Activated CD4-positive, alpha-beta T cell treated with anti-CD3 and anti-CD28 coated beads for 36 hours (primary cell): ENCODE measurements at regions of chr1 and their contacts with region 1.

Region 1: DNA sequence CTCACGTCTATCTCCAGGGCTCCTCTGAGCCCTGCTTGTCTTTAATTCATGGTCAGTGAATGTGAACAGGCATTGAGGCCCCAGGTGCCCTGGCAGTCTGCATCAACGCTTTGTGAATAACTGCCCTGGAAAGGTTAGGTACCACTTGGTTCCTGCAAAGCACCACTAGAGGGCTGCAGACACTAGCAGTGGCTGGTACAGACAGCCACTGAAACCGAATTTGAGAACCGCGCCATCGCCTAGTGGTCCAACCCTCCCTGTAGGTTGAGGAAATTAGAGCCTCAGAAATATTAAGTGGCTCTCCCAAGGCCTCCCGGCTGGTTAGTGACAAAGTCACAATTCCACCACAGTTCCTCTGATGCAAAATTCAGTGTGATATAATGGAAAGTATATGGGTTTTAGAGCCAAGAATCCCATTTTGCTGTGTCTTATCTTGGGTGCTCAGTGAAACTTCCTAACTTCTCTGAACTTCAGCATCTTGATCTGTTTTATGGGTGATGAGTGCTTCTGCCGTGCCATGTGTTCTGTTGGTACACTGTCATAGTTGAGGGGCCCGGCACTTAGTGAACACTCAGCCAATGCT is 46.2 kb upstream of the BCL9 start:
- DNase-seq: peak; percentile 85
- ATAC-seq: peak; percentile 100
- H3K4me3 Mint-ChIP-seq: no peak overlapping the region
- H3K27ac Mint-ChIP-seq: no peak overlapping the region
- H3K4me1 Mint-ChIP-seq: peaks cover 3% of the 10 kb centered on the region
- H3K27me3 Mint-ChIP-seq: peaks cover 2% of the 10 kb centered on the region

Region 2: DNA sequence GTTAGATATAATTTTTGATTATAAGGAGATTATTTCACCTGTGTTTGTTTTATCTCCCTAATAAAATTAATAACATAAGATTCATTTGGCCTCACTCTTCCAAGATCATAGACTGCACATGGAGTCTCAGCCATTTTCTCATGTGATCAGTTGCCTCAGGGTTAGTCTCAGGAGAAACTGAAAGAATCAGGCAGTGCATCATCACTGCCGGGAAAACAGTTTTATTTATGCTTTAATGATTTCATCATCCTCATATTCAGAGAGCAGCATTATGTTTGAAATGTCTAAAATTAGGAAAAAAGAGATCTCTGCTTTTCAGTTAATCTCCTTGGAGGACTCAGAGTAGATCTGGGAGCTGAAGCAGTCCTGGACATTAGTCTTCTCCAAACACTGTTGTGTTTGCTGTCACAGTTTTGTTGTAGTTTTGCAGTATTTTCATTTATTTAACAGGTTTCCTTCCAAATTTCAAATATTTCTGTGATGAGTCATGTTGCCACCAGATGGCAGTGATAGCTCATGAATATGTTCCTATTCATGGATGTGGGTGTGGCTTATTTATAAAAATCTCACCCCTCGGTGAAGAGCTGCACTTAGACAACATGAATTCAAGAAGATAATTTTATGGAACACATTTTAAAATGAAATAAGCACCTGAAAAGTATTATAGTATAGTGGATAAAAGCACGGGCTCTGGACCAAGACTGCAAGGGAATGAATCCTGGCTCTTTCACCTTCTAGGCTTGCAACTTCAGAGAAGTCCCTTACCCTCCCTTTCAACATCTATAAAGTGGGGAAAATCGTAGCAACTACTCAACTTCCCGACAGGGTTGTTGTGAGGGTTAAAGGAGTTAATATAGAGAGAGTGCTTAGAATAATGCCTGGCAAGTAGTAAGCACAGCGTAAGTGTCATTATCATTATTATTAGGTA is 221.4 kb before region 1 on chr1:
- CTCF ChIA-PET with region 1: no interaction called
- POLR2A ChIA-PET with region 1: no interaction called
- intact Hi-C with region 1: loop called in 1 of 2 experiments (anchors 2 kb)
- DNase-seq: peak; percentile 37
- ATAC-seq: peak; percentile 47
- H3K4me3 Mint-ChIP-seq: no peak overlapping the region
- H3K27ac Mint-ChIP-seq: no peak overlapping the region
- H3K4me1 Mint-ChIP-seq: peaks cover 6% of the 10 kb centered on the region
- H3K27me3 Mint-ChIP-seq: no peaks in the 10 kb centered on the region

Region 3: GRCh38 chr1:147515046-147515869 is 20.2 kb after region 1 on chr1:
- CTCF ChIA-PET with region 1: interaction called, 12 read pairs
- POLR2A ChIA-PET with region 1: no interaction called
- intact Hi-C with region 1: no loop called
- DNase-seq: peak; percentile 26
- ATAC-seq: peak; percentile 94
- H3K4me3 Mint-ChIP-seq: no peak overlapping the region
- H3K27ac Mint-ChIP-seq: peak overlapping the region; percentile 61
- H3K4me1 Mint-ChIP-seq: peaks cover 18% of the 10 kb centered on the region
- H3K27me3 Mint-ChIP-seq: no peaks in the 10 kb centered on the region

Region 4: GRCh38 chr1:147560756-147561471 is 65.8 kb after region 1 on chr1:
- CTCF ChIA-PET with region 1: no interaction called
- POLR2A ChIA-PET with region 1: no interaction called
- intact Hi-C with region 1: no loop called
- DNase-seq: no peak
- ATAC-seq: no peak
- H3K4me3 Mint-ChIP-seq: no peak overlapping the region
- H3K27ac Mint-ChIP-seq: no peak overlapping the region
- H3K4me1 Mint-ChIP-seq: peaks cover 25% of the 10 kb centered on the region
- H3K27me3 Mint-ChIP-seq: no peaks in the 10 kb centered on the region

Region 5: GRCh38 chr1:147627435-147628110 is 132.5 kb after region 1 on chr1:
- CTCF ChIA-PET with region 1: interaction called, 6 read pairs
- POLR2A ChIA-PET with region 1: no interaction called
- intact Hi-C with region 1: loop called (anchors 1 to 2 kb)
- DNase-seq: peak; percentile 72
- ATAC-seq: peak; percentile 78
- H3K4me3 Mint-ChIP-seq: no peak overlapping the region
- H3K27ac Mint-ChIP-seq: peak overlapping the region; percentile 29
- H3K4me1 Mint-ChIP-seq: peaks cover 35% of the 10 kb centered on the region
- H3K27me3 Mint-ChIP-seq: no peaks in the 10 kb centered on the region

Region 6: GRCh38 chr1:147700042-147701006 is 205.2 kb after region 1 on chr1:
- CTCF ChIA-PET with region 1: interaction called, 11 read pairs
- POLR2A ChIA-PET with region 1: no interaction called
- intact Hi-C with region 1: loop called (anchors 1 kb)
- DNase-seq: peak; percentile 74
- ATAC-seq: peak; percentile 97
- H3K4me3 Mint-ChIP-seq: no peak overlapping the region
- H3K27ac Mint-ChIP-seq: peak overlapping the region; percentile 66
- H3K4me1 Mint-ChIP-seq: peaks cover 10% of the 10 kb centered on the region
- H3K27me3 Mint-ChIP-seq: peaks cover 2% of the 10 kb centered on the region